IMR-90 (cell line): ENCODE measurements at regions of chr9 and their contacts with region 1.

Region 1: GRCh38 chr9:76835571-76836283 is 70.2 kb downstream of the PRUNE2 start:
- DNase-seq: peak; percentile 87
- ATAC-seq: peak; percentile 90
- H3K4me3 ChIP-seq: no peak overlapping the region
- H3K27ac ChIP-seq: peak overlapping the region; percentile 93
- H3K4me1 ChIP-seq: peaks cover 8% of the 10 kb centered on the region
- H3K27me3 ChIP-seq: no peaks in the 10 kb centered on the region
- CTCF ChIP-seq: no peak
- POLR2A ChIP-seq: peak; percentile 29; the same call in 1 of the 2 replicates
- RAD21 ChIP-seq: no peak

Region 2: GRCh38 chr9:76866689-76867088 is 31.0 kb after region 1 on chr9:
- CTCF ChIA-PET with region 1: no interaction called
- POLR2A ChIA-PET with region 1: no interaction called
- dilution Hi-C with region 1: no loop called
- in situ Hi-C with region 1: no loop called
- intact Hi-C with region 1: loop called (anchors 2 kb)
- DNase-seq: peak; percentile 95
- ATAC-seq: peak; percentile 98
- H3K4me3 ChIP-seq: no peak overlapping the region
- H3K27ac ChIP-seq: peak overlapping the region; percentile 73
- H3K4me1 ChIP-seq: peaks cover 9% of the 10 kb centered on the region
- H3K27me3 ChIP-seq: no peaks in the 10 kb centered on the region
- CTCF ChIP-seq: no peak
- POLR2A ChIP-seq: no peak
- RAD21 ChIP-seq: no peak

Region 3: DNA sequence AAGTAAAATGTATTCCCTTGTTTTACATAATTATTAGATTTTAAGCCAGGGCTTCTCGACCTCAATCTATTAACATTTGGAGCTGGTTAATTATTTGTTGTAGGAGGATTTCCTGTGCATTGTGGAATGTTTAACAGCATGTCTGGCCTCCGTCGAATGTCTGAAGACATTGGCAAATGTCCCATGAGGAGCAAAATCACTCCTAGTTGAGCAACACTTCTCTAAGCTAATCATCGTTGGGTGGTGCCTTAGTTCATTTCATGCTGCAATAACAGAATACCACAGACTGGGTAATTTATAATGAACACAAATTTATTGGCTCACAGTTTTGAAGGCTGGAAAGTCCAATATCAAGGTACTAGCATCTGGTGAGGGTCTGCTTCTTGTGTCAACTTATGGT is 328.2 kb after region 1 on chr9:
- CTCF ChIA-PET with region 1: no interaction called
- POLR2A ChIA-PET with region 1: no interaction called
- dilution Hi-C with region 1: no loop called
- in situ Hi-C with region 1: no loop called
- intact Hi-C with region 1: no loop called
- DNase-seq: peak; percentile 58
- ATAC-seq: peak; percentile 72
- H3K4me3 ChIP-seq: no peak overlapping the region
- H3K27ac ChIP-seq: no peak overlapping the region
- H3K4me1 ChIP-seq: peaks cover 4% of the 10 kb centered on the region; the same call in 1 of the 2 replicates
- H3K27me3 ChIP-seq: no peaks in the 10 kb centered on the region; the same call in 1 of the 2 replicates
- CTCF ChIP-seq: no peak
- POLR2A ChIP-seq: no peak
- RAD21 ChIP-seq: no peak